ENCODE measurements at regions of chr16 and their contacts with region 1.

Region 1: DNA sequence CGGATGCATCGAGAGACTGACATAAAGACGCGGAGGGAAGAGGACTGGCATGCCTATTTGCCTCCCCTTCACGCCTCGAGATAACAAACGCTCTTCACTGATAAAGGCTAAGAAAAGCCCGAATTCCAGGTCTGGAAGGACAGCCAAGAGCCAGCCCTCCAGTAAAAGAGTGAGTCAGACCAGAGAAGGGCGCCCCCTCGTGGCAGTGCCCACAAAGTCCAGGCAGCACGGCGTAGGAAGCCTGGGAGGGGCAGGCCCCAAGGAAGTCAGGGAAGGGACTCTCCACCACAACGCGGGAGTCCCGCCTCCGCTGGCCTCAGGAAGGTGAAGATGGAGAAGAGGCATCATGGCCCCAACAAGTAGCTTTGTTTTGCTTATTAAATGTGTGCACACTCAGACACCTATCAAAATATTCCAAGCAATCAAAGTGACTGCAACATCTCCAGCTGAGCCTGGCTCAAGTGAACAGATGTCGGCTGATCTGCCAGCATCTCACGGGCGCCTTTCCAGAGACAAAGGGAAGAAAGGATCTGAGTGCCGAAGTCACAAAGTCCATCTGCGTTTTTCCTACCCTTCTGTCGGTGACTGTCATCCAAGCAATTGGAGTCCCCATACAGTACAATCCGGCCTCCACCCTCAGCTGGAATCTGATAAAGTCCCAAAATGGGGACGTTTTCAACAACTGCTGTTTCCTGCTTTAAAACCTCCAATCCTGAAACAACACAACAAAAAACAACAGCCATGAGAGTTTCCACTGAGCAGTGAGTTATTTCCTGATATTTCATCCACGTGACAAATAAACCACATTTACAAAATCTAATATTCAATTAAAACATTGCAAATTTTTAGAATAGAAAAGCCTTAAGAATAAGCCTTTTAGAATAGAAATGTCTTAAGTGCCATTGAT is 20.4 kb upstream of the SLC38A8 start:
- DNase-seq: peak; percentile 90
- H3K4me3 ChIP-seq: no peak overlapping the region
- H3K27ac ChIP-seq: no peak overlapping the region
- H3K4me1 ChIP-seq: peaks cover 0 to under 1% (median 0%) of the 10 kb centered on the region in 6 donors
- H3K27me3 ChIP-seq: no peaks in the 10 kb centered on the region
- CTCF ChIP-seq: peak; percentile 46 to 91 (median 78)
- POLR2A ChIP-seq: no peak

Region 2: GRCh38 chr16:83826146-83826913 is 236.7 kb before region 1 on chr16:
- intact Hi-C with region 1: loop called (anchors 10 kb)
- DNase-seq: peak; percentile 94
- H3K4me3 ChIP-seq: no peak overlapping the region
- H3K27ac ChIP-seq: no peak overlapping the region
- H3K4me1 ChIP-seq: peaks cover 0 to 8% (median 5%) of the 10 kb centered on the region in 6 donors
- H3K27me3 ChIP-seq: peaks cover 0 to under 1% (median 0%) of the 10 kb centered on the region in 7 donors
- CTCF ChIP-seq: peak; percentile 72 to 96 (median 92)
- POLR2A ChIP-seq: no peak

Region 3: GRCh38 chr16:83952940-83953795 is 109.8 kb before region 1 on chr16 and contains the start of gene OSGIN1:
- intact Hi-C with region 1: loop called (anchors 10 kb)
- DNase-seq: peak; percentile 94
- H3K4me3 ChIP-seq: peak within 1 kb of the TSS; percentile 29 to 77 (median 48)
- H3K27ac ChIP-seq: peak within 1 kb of the TSS; percentile 68 to 95 (median 88)
- H3K4me1 ChIP-seq: peaks cover 0 to 51% (median 34%) of the 10 kb centered on the region in 6 donors
- H3K27me3 ChIP-seq: peaks cover 0 to 44% (median 5%) of the 10 kb centered on the region in 7 donors
- CTCF ChIP-seq: peak in 1 of 11 experiments; percentile 11
- POLR2A ChIP-seq: peak in 1 of 3 donors; percentile 87
- total RNA-seq, gene OSGIN1: 4.7 to 13.5 (median 9.5) TPM

Region 4: DNA sequence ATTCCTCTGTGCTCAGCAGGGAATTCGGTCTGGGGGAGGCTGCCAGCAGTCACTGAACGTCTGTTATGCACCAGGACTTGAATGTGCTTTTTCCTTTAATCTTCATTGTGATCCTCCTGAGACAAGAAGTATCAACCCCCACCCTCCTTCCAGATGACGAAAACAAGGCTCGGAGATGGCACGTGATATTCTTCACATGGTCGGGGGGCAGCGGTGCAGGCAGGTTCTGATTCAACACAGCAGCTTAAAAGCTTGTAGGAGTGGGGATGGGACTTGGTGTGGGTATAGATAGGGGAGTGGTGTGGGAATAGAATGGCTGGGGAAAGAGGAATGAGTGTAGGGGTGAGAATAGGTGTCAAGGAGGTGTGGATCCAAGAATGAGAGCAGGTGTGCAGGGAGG is 88.5 kb before region 1 on chr16:
- intact Hi-C with region 1: no loop called
- DNase-seq: no peak
- H3K4me3 ChIP-seq: no peak overlapping the region
- H3K27ac ChIP-seq: no peak overlapping the region
- H3K4me1 ChIP-seq: no peaks in the 10 kb centered on the region
- H3K27me3 ChIP-seq: peaks cover 0 to 52% (median 11%) of the 10 kb centered on the region in 7 donors
- CTCF ChIP-seq: no peak
- POLR2A ChIP-seq: no peak

Region 5: GRCh38 chr16:84096115-84097012 is 33.4 kb after region 1 on chr16:
- intact Hi-C with region 1: no loop called
- DNase-seq: no peak
- H3K4me3 ChIP-seq: no peak overlapping the region
- H3K27ac ChIP-seq: no peak overlapping the region
- H3K4me1 ChIP-seq: peaks cover 0 to 22% (median 0%) of the 10 kb centered on the region in 6 donors
- H3K27me3 ChIP-seq: no peaks in the 10 kb centered on the region
- CTCF ChIP-seq: no peak
- POLR2A ChIP-seq: no peak

Measured in spleen (tissue), 13 donors.